ENCODE measurements at regions of chr4 and their contacts with region 1.

Region 1: DNA sequence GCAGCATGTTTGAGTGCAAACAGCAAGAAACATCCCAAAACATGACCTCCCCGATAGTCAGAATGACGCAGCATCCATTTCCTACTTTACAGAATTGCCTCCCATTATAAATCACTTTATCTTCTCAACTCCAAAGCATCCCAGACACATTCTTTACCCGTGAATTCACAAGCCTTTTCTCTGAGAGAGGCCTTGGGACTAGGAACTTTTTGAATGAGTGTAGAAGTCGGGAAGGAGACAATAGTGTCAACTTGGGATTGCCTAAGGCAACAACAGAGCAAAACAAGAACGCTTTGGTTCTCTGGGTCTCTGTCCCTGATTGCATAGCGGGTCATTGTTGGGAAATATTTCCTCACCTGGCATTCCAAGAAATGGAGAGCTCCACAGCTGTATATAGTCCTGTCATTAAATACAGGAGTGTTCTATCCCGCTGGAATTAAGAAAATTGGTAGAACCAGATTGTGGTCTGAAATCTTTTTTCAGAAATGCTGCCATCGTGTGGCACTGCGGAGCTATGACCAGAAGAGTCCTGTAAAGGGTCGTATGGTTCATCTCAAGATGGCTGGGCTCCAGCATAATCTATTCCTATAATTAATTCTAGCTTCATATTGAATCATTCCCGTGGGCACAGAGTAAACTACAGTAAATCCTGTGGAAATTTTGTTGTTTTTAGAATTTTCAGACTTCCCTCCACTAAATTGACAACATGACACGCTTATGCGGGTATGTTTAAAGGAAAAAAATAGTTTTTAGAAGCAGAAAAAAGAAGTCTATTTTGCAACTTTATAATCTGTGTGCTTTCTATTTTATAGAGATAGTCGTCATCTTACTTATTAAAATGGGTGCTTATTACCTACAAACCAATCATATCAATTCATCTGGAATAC is 2.0 kb upstream of the SPP1 start:
- DNase-seq: peak in 1 of 2 donors; percentile 35
- ATAC-seq: peak in 3 of 4 donors; percentile 56 to 70 (median 65)
- H3K4me3 ChIP-seq: no peak overlapping the region
- H3K27ac ChIP-seq: no peak overlapping the region
- H3K4me1 ChIP-seq: no peaks in the 10 kb centered on the region
- H3K27me3 ChIP-seq: no peaks in the 10 kb centered on the region
- CTCF ChIP-seq: peak; percentile 84

Region 2: DNA sequence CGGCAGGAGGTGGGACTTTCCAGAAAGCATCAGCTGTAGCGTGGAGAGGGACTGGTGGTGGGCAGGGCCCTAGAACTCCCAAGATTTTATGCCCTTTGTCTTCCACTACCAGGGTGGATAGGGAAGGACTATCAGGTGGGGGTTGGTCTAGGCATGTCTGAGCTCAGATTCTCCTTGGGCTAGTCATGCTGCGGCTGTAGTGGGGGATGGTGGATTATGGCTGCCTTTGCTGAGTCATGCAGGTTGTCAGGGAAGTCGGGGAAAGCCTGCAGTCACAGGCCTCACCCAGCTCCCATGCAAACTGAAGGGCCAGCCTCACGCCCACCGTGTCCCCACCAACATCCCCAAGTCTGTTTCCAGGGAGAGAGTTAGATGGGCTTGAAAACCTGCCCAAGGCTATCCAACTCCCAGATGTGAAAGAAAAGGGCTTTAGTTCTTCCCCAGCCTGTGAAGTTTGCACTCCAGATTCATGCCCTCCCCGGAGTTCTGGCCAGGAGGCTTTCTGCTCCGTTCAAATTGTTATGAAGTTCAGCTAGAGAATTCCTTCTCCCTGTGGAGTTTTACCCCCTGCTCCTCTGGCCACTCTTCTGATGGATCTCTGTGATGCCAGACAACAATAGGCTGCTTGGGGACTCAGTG is 154.1 kb before region 1 on chr4:
- intact Hi-C with region 1: no loop called
- DNase-seq: no peak
- ATAC-seq: no peak
- H3K4me3 ChIP-seq: no peak overlapping the region
- H3K27ac ChIP-seq: no peak overlapping the region
- H3K4me1 ChIP-seq: no peaks in the 10 kb centered on the region
- H3K27me3 ChIP-seq: no peaks in the 10 kb centered on the region
- CTCF ChIP-seq: no peak

Region 3: DNA sequence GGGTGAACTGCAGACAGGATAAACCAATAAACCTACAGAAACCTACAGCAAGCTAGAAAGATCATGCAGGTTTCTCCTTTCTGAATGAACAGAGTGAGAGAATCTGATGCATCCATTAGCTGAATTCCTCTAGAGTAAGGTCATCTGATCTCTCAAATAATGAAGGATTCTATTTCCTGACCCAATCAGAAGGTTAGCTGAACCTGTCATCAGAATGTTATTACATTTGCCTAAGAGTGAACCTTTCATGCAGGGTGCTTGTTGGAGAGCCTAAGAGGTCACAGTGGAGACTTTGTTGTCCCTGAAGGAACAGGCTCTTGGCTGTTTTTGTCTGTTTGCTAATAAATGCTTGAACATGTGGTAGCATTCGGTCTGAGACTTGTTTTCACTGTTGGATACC is 116.7 kb before region 1 on chr4:
- intact Hi-C with region 1: loop called (anchors 2 to 5 kb)
- DNase-seq: no peak
- ATAC-seq: no peak
- H3K4me3 ChIP-seq: no peak overlapping the region
- H3K27ac ChIP-seq: no peak overlapping the region
- H3K4me1 ChIP-seq: no peaks in the 10 kb centered on the region
- H3K27me3 ChIP-seq: peaks cover 0 to 2% (median 0%) of the 10 kb centered on the region in 3 donors
- CTCF ChIP-seq: no peak

Region 4: DNA sequence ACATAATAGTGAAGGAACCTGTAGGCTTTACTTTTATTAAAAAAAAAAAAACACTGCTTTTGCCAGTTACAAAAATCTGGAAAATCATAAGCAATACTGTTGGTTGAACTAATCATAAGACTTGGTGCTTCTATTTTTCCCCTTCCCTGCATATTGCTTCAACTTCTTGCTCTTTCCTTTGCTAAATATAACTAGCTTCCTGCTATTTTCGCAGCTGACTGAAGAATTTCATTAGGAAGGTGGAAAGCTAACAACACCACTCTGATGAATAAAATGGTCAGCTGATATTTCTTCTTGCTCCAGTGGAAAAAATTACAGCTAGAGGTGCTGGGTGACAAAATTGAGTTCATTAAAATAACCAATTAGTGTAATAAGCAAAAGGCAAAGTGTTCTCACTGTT is 101.5 kb before region 1 on chr4:
- intact Hi-C with region 1: no loop called
- DNase-seq: no peak
- ATAC-seq: no peak
- H3K4me3 ChIP-seq: no peak overlapping the region
- H3K27ac ChIP-seq: no peak overlapping the region
- H3K4me1 ChIP-seq: no peaks in the 10 kb centered on the region
- H3K27me3 ChIP-seq: peaks cover 0 to 3% (median 0%) of the 10 kb centered on the region in 3 donors
- CTCF ChIP-seq: no peak

Measured in psoas muscle (tissue), 8 donors.